ENCODE measurements at regions of chr11 and their contacts with region 1.

Region 1: GRCh38 chr11:47454180-47454644 is 5.3 kb upstream of the RAPSN start:
- DNase-seq: peak; percentile 78
- ATAC-seq: peak; percentile 86
- H3K4me3 ChIP-seq: no peak overlapping the region
- H3K27ac ChIP-seq: no peak overlapping the region
- H3K4me1 ChIP-seq: no peaks in the 10 kb centered on the region
- H3K27me3 ChIP-seq: no peaks in the 10 kb centered on the region
- CTCF ChIP-seq: peak; percentile 78

Region 2: DNA sequence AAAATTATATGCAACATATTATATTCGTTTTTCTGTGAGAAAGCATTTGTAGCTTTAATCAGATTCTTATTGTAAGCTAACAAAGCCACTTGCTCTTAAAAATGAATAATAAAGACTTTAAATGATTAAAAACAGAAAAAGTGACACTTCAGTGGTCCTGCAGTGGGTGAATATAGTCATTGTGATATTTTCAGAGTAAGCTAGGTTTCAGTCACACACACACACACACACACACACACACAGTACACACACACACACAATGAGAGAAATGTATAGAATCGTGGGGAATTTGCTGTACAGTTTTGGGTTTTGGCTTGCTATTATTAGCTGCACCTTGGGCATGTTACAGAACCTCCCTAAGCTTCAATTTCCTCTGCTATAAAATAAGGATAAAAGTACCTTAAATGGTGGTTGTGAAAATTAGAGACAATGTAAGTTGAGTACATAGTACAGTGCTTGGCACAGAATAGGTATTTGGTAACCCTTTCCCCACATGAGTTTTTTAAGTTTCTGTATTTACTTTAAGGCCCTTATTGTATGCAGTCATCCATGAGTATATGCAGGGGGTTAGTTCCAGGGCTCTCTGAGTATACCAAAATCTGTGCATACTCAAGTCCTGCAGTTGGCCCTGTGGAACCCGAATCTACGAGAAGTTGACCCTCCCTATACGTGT is 477.9 kb before region 1 on chr11:
- CTCF ChIA-PET with region 1: no interaction called
- POLR2A ChIA-PET with region 1: interaction called, 11 read pairs
- intact Hi-C with region 1: no loop called
- DNase-seq: no peak
- ATAC-seq: no peak
- H3K4me3 ChIP-seq: no peak overlapping the region
- H3K27ac ChIP-seq: no peak overlapping the region
- H3K4me1 ChIP-seq: peaks cover 19% of the 10 kb centered on the region
- H3K27me3 ChIP-seq: no peaks in the 10 kb centered on the region
- CTCF ChIP-seq: no peak

Region 3: DNA sequence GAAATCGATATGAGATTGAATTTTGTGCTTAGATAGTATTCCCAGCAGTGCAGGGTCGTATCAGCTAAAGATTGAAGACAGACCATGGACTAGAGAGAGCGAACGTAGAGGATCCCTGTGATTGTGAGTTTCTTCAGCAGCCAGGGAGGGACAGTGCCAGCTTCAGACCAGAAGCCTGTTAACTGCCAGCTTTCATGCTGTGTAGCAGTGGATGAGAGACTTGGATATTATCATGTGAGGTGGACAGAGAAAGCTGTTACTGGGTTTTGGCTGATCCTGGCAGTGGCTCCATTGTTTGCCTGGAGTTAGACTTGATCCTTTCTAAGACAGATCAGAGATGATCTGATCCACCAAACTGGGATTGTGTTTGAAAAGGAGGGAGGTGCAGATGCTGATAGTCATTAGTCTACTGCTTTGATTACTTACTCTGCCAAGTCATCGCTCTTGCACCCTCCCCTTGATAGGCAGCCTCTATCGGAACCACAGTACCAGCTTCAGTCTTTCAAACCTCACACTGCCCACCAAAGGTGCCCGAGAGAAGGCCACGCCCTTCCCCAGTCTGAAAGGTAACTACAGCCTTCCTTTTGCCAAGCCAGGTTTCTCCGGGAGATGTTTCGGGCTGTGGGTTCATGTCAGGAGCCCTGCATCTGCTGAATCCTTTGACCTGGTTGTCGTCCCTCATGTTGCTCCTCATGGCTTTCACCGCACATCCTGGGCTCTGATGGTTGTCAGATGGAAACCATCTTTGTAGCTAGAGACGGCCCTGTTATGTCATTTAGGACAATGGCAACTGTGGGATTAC is 168.0 kb before region 1 on chr11:
- CTCF ChIA-PET with region 1: no interaction called
- POLR2A ChIA-PET with region 1: no interaction called
- intact Hi-C with region 1: no loop called
- DNase-seq: no peak
- ATAC-seq: no peak
- H3K4me3 ChIP-seq: no peak overlapping the region
- H3K27ac ChIP-seq: no peak overlapping the region
- H3K4me1 ChIP-seq: no peaks in the 10 kb centered on the region
- H3K27me3 ChIP-seq: no peaks in the 10 kb centered on the region
- CTCF ChIP-seq: no peak

Region 4: GRCh38 chr11:47329987-47330931 is 124.0 kb before region 1 on chr11:
- CTCF ChIA-PET with region 1: no interaction called
- POLR2A ChIA-PET with region 1: no interaction called
- intact Hi-C with region 1: no loop called
- DNase-seq: no peak
- ATAC-seq: peak; percentile 53
- H3K4me3 ChIP-seq: no peak overlapping the region
- H3K27ac ChIP-seq: no peak overlapping the region
- H3K4me1 ChIP-seq: no peaks in the 10 kb centered on the region
- H3K27me3 ChIP-seq: no peaks in the 10 kb centered on the region
- CTCF ChIP-seq: no peak

Region 5: GRCh38 chr11:47355283-47356128 is 98.7 kb before region 1 on chr11:
- CTCF ChIA-PET with region 1: no interaction called
- POLR2A ChIA-PET with region 1: no interaction called
- intact Hi-C with region 1: no loop called
- DNase-seq: peak; percentile 95
- ATAC-seq: peak; percentile 96
- H3K4me3 ChIP-seq: peak overlapping the region; percentile 58
- H3K27ac ChIP-seq: no peak overlapping the region
- H3K4me1 ChIP-seq: no peaks in the 10 kb centered on the region
- H3K27me3 ChIP-seq: no peaks in the 10 kb centered on the region
- CTCF ChIP-seq: peak; percentile 98

Region 6: GRCh38 chr11:47373876-47374720 is 80.1 kb before region 1 on chr11:
- CTCF ChIA-PET with region 1: interaction called, 4 read pairs
- POLR2A ChIA-PET with region 1: no interaction called
- intact Hi-C with region 1: loop called (anchors 1 kb)
- DNase-seq: peak; percentile 74
- ATAC-seq: peak; percentile 95
- H3K4me3 ChIP-seq: no peak overlapping the region
- H3K27ac ChIP-seq: no peak overlapping the region
- H3K4me1 ChIP-seq: peaks cover 9% of the 10 kb centered on the region; the same call in 1 of the 2 replicates
- H3K27me3 ChIP-seq: no peaks in the 10 kb centered on the region
- CTCF ChIP-seq: peak; percentile 91

Region 7: GRCh38 chr11:47407746-47408590 is 46.2 kb before region 1 on chr11 and contains the start of gene SLC39A13:
- CTCF ChIA-PET with region 1: interaction called, 4 read pairs
- POLR2A ChIA-PET with region 1: no interaction called
- intact Hi-C with region 1: loop called (anchors 2 kb)
- DNase-seq: peak; percentile 90
- ATAC-seq: peak; percentile 79
- H3K4me3 ChIP-seq: peak within 1 kb of the TSS; percentile 88
- H3K27ac ChIP-seq: peak within 1 kb of the TSS; percentile 85
- H3K4me1 ChIP-seq: peaks cover 24% of the 10 kb centered on the region
- H3K27me3 ChIP-seq: no peaks in the 10 kb centered on the region
- CTCF ChIP-seq: peak; percentile 74
- total RNA-seq, gene SLC39A13: 29.4 and 32.5 TPM in 2 replicates

Region 8: DNA sequence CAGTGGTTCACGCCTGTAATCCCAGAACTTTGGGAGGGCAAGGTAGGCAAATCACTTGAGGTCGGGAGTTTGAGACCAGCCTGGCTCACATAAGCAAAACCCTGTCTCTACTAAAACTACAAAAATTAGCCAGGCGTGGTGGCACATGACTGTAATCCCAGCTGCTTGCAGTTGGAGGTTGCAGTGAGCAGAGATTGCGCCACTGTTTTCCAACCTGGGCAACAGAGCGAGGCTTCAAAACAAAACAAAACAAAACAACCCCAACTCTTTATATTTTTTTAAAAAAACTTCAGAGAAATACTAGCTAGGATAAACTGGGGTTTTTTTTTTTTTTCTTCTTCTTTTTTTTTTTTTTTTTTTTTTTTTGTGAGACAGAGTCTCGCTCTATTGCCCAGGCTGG is 26.6 kb after region 1 on chr11:
- CTCF ChIA-PET with region 1: no interaction called
- POLR2A ChIA-PET with region 1: no interaction called
- intact Hi-C with region 1: no loop called
- DNase-seq: no peak
- ATAC-seq: no peak
- H3K4me3 ChIP-seq: no peak overlapping the region
- H3K27ac ChIP-seq: no peak overlapping the region
- H3K4me1 ChIP-seq: peaks cover 23% of the 10 kb centered on the region
- H3K27me3 ChIP-seq: no peaks in the 10 kb centered on the region
- CTCF ChIP-seq: no peak